ENCODE measurements at regions of chr1 and their contacts with region 1.

Region 1: DNA sequence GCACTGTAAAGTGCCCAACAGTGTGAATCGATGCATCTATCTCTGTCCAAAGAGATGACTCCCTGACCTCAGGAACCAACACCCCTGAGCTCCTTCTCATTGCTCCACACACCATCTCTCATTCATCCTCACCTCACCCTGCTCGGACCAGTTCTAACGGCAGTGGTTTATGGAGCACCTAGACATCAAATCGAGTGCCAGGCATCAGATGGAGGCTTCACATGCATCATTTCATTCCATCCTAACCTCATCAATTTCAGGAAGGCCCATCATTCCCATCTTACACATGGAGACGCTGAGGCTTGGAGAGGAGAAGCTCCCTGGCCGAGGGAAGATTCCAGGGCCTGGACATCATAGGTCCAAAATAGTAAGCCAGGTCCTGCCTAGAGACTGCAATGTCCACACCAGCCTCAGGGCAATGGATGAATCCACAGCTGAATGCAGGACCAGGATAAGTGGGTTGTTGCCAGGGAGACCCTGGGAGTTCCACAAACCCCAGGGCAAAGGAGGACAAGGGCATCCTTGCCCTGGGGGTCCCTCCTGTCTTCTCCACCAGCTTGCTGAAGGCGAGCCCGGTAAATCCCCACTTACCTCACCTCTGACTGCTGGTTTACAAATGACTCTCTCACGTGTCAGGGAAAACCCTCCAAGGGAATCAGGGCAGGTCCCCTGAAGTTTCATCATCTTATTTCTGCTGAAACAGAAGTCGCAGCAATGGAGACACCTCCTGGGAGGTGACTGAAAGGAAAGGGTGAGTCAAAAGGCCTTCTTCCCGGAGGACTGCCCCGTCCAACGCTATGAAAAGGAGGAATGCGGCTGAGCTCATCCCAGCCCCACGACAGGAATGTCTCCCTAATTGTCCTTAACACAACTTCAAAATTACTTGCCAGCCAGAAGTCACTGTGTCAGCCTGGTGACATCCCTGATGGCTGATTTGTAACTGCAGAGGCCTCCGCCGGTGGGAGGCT is 9.0 kb upstream of the IFFO2 start:
- DNase-seq: peak; percentile 73
- H3K4me3 Mint-ChIP-seq: no peak overlapping the region
- H3K27ac Mint-ChIP-seq: no peak overlapping the region
- H3K4me1 Mint-ChIP-seq: peaks cover 32% of the 10 kb centered on the region
- H3K27me3 Mint-ChIP-seq: peaks cover 4% of the 10 kb centered on the region
- CTCF ChIP-seq: no peak

Region 2: GRCh38 chr1:18949686-18950400 is 15.6 kb before region 1 on chr1:
- CTCF ChIA-PET with region 1: interaction called, 4 read pairs
- POLR2A ChIA-PET with region 1: interaction called, 42 read pairs
- intact Hi-C with region 1: no loop called
- DNase-seq: peak; percentile 48
- H3K4me3 Mint-ChIP-seq: peak overlapping the region; percentile 64
- H3K27ac Mint-ChIP-seq: peak overlapping the region; percentile 88
- H3K4me1 Mint-ChIP-seq: peaks cover 59% of the 10 kb centered on the region
- H3K27me3 Mint-ChIP-seq: no peaks in the 10 kb centered on the region
- CTCF ChIP-seq: no peak

Region 3: DNA sequence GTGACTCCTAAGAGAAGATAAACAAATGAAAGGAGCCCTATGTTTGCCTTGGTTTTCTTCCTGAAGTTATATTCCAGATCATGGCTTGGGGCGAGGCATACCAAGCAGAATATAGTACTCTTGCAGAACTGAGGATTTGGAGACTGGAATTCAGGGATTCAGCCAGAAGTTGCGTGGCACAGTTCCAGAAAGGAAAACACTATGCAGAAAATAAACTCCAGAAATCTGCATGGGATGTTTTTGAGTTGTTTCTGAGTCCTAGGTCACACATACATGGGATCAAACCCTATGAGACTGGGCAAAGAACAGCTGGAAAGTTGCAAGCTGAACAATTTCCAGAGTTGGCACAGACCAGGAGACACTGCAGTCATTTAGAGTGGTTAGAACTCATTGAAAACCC is 33.9 kb after region 1 on chr1:
- CTCF ChIA-PET with region 1: no interaction called
- POLR2A ChIA-PET with region 1: interaction called, 15 read pairs
- intact Hi-C with region 1: no loop called
- DNase-seq: no peak
- H3K4me3 Mint-ChIP-seq: no peak overlapping the region
- H3K27ac Mint-ChIP-seq: no peak overlapping the region
- H3K4me1 Mint-ChIP-seq: peaks cover 11% of the 10 kb centered on the region
- H3K27me3 Mint-ChIP-seq: no peaks in the 10 kb centered on the region
- CTCF ChIP-seq: no peak

Region 4: GRCh38 chr1:19485362-19486187 is 520.1 kb after region 1 on chr1 and contains the start of gene CAPZB:
- CTCF ChIA-PET with region 1: no interaction called
- POLR2A ChIA-PET with region 1: no interaction called
- intact Hi-C with region 1: no loop called
- DNase-seq: peak; percentile 88
- H3K4me3 Mint-ChIP-seq: peak within 1 kb of the TSS; percentile 86
- H3K27ac Mint-ChIP-seq: peak within 1 kb of the TSS; percentile 94
- H3K4me1 Mint-ChIP-seq: peaks cover 26% of the 10 kb centered on the region
- H3K27me3 Mint-ChIP-seq: no peaks in the 10 kb centered on the region
- CTCF ChIP-seq: no peak
- total RNA-seq, gene CAPZB: 252 and 259 TPM in 2 replicates